Activated CD8-positive, alpha-beta T cell treated with anti-CD3 and anti-CD28 coated beads, Interleukin-2, amount 10 ng/mL, durations not matched to agents 7 days and 5 days (primary cell): ENCODE measurements at regions of chr14 and their contacts with region 1.

Region 1: GRCh38 chr14:22526218-22526617 is 62.8 kb downstream of the DAD1 start:
- DNase-seq: no peak
- ATAC-seq: peak; percentile 6
- H3K4me3 Mint-ChIP-seq: peak overlapping the region; percentile 89
- H3K27ac Mint-ChIP-seq: peak overlapping the region; percentile 96
- H3K4me1 Mint-ChIP-seq: peaks cover 87% of the 10 kb centered on the region
- H3K27me3 Mint-ChIP-seq: no peaks in the 10 kb centered on the region

Region 2: DNA sequence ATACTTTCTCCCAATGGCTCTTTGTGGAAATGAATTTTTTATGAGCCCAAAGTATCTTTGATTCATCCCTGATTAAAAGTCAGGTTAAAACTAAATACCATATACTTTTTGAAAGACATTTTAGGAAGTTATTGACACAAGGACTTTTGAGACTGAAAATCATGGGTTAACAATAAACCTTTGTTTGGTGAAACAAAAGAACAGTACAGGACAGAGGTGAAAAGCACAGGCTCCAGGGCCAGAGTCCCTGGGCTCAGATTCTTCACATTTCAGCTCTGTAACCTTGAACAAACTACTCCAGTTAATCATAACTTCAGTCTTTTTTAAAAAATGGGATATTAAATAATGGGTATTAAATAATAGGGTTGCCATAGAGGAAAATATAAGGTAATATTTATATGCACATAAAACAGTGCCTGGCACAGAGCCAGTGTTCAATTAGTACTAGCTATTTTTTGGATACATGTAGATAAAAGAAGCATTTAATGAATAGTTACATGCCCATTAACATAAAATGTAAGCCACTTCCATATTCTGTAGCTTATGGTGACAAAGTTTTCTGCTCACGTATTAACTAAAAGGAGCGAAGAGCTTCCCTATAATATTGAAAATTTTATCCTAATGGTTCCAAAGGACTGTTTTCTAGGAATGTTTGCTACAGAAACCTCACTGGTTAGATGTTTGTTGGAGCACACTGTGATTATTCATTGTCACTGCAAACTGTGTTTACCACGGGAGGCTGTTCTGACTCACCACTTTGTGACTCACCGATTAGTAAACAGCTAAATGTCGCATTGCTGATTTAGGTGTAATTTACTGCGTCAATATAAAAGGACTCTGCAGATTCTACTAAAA is 192.6 kb before region 1 on chr14:
- CTCF ChIA-PET with region 1: no interaction called
- POLR2A ChIA-PET with region 1: no interaction called
- DNase-seq: no peak
- ATAC-seq: no peak
- H3K4me3 Mint-ChIP-seq: no peak overlapping the region
- H3K27ac Mint-ChIP-seq: no peak overlapping the region
- H3K4me1 Mint-ChIP-seq: no peaks in the 10 kb centered on the region
- H3K27me3 Mint-ChIP-seq: no peaks in the 10 kb centered on the region

Region 3: GRCh38 chr14:22358726-22359125 is 167.5 kb before region 1 on chr14:
- CTCF ChIA-PET with region 1: no interaction called
- POLR2A ChIA-PET with region 1: no interaction called
- DNase-seq: no peak
- ATAC-seq: no peak
- H3K4me3 Mint-ChIP-seq: no peak overlapping the region
- H3K27ac Mint-ChIP-seq: no peak overlapping the region
- H3K4me1 Mint-ChIP-seq: no peaks in the 10 kb centered on the region
- H3K27me3 Mint-ChIP-seq: no peaks in the 10 kb centered on the region

Region 4: DNA sequence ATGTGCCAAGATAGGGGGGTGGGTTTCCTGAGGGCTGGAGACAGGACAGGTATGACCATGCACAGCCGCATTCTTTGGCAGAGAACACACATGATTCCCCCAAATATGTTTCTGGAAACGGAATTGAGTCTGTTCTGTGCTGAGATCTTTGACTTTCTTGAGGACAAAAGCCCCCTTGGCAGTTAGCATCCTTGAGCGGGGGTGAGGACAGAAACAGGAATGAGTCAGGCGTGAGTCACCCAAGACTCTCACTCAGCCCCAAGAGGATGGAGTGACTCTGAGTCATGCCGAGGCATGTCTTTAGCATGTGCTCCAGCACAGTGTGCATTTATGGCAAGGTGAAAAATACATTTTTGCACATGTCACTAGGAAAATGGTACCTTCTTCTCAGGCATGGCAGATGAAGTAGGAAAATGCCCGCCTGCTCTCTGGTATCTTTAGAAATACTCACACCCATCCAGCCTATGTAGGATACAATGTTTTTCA is 10.7 kb after region 1 on chr14:
- CTCF ChIA-PET with region 1: interaction called, 24 read pairs
- POLR2A ChIA-PET with region 1: interaction called, 904 read pairs
- DNase-seq: peak; percentile 87
- ATAC-seq: peak; percentile 85
- H3K4me3 Mint-ChIP-seq: peak overlapping the region; percentile 76
- H3K27ac Mint-ChIP-seq: peak overlapping the region; percentile 98
- H3K4me1 Mint-ChIP-seq: peaks cover 93% of the 10 kb centered on the region
- H3K27me3 Mint-ChIP-seq: no peaks in the 10 kb centered on the region